HCT116 (cell line): ENCODE measurements at regions of chr2 and their contacts with region 1.

Region 1: GRCh38 chr2:64586883-64587481 is 62.9 kb downstream of the AFTPH start:
- DNase-seq: peak; percentile 34
- ATAC-seq: peak; percentile 77
- H3K4me3 ChIP-seq: no peak overlapping the region
- H3K27ac ChIP-seq: no peak overlapping the region
- H3K4me1 ChIP-seq: no peaks in the 10 kb centered on the region
- H3K27me3 ChIP-seq: no peaks in the 10 kb centered on the region
- CTCF ChIP-seq: peak; percentile 56 to 73 (median 72); a peak in 5 of 6 replicates
- POLR2A ChIP-seq: no peak
- RAD21 ChIP-seq: peak; percentile 84

Region 2: GRCh38 chr2:64865073-64865830 is 278.3 kb after region 1 on chr2:
- CTCF ChIA-PET with region 1: interaction called, 5 read pairs
- POLR2A ChIA-PET with region 1: no interaction called
- RAD21 ChIA-PET with region 1: no interaction called
- intact Hi-C with region 1: loop called (anchors 1 kb)
- DNase-seq: no peak
- ATAC-seq: peak; percentile 91
- H3K4me3 ChIP-seq: peak overlapping the region; percentile 45 to 64
- H3K27ac ChIP-seq: peak overlapping the region; percentile 83
- H3K4me1 ChIP-seq: peaks cover 17 to 70% of the 10 kb centered on the region in 2 experiments
- H3K27me3 ChIP-seq: no peaks in the 10 kb centered on the region
- CTCF ChIP-seq: peak in 2 of 3 experiments; percentile 44 to 50; a peak in 4 of 6 replicates
- POLR2A ChIP-seq: no peak
- RAD21 ChIP-seq: no peak